ENCODE measurements at regions of chr7 and their contacts with region 1.

Region 1: DNA sequence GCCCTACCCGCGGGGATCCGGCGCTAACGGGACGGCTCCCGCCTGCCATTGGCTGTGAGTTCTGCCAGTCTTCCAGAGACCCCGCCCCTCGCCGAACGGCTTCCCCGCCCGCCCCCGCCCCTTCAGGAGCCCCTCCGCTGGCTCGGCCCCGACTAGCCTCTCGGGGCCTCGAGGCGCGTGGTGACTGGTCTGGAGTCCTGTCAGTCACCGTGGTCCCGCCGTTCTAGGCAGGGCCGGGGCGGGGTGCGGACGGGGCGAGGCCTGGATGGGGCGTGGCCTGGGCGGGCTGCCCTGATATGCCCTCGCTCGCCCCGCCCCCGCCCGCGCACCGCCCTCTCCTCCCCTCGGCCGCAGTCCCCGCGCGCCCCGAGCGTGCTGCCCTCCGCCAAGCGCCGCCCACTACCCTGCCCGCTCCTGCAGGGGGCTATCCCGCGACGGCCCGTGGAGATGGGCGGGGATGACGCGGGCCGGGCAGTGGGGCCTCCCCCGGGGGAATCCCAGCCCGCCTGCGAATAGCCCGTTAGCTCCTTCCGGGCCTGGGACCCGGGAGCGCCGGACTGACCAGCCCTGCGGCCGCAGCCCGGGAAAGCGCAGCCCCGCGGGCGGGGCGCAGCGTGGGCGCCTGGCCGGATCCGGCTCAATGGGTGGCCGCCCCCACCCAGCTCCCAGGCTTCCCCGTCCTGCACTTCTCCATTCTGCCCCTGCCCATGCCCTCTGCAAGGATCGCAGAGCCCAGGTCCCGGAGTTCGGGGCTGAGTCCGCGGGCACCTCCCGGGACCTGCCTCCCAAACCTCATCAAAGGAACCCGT is 450 bp upstream of the HIP1 start:
- DNase-seq: peak; percentile 99
- ATAC-seq: peak; percentile 98
- H3K4me3 Mint-ChIP-seq: peak overlapping the region; percentile 91
- H3K27ac Mint-ChIP-seq: peak overlapping the region; percentile 96
- H3K4me1 Mint-ChIP-seq: peaks cover 21% of the 10 kb centered on the region
- H3K27me3 Mint-ChIP-seq: peaks cover 13% of the 10 kb centered on the region

Region 2: GRCh38 chr7:75662579-75663301 is 76.5 kb before region 1 on chr7:
- CTCF ChIA-PET with region 1: no interaction called
- POLR2A ChIA-PET with region 1: no interaction called
- DNase-seq: no peak
- ATAC-seq: no peak
- H3K4me3 Mint-ChIP-seq: no peak overlapping the region
- H3K27ac Mint-ChIP-seq: no peak overlapping the region
- H3K4me1 Mint-ChIP-seq: no peaks in the 10 kb centered on the region
- H3K27me3 Mint-ChIP-seq: no peaks in the 10 kb centered on the region

Region 3: GRCh38 chr7:75762314-75762917 is 23.2 kb after region 1 on chr7:
- CTCF ChIA-PET with region 1: interaction called, 10 read pairs
- POLR2A ChIA-PET with region 1: no interaction called
- DNase-seq: no peak
- ATAC-seq: peak; percentile 86
- H3K4me3 Mint-ChIP-seq: no peak overlapping the region
- H3K27ac Mint-ChIP-seq: no peak overlapping the region
- H3K4me1 Mint-ChIP-seq: peaks cover 3% of the 10 kb centered on the region
- H3K27me3 Mint-ChIP-seq: no peaks in the 10 kb centered on the region

Measured in activated CD8-positive, alpha-beta T cell treated with anti-CD3 and anti-CD28 coated beads, Interleukin-2, amount 10 ng/mL, durations not matched to agents 7 days and 5 days (primary cell).